CD4-positive, alpha-beta memory T cell (primary cell): ENCODE measurements at regions of chr3 and their contacts with region 1.

Region 1: GRCh38 chr3:32570421-32571191 is at the start of gene DYNC1LI1:
- DNase-seq: peak; percentile 89 to 90 (median 90)
- H3K4me3 ChIP-seq: peak within 1 kb of the TSS; percentile 90 to 93
- H3K4me3 Mint-ChIP-seq: peak within 1 kb of the TSS; percentile 91 to 97 (median 94)
- H3K27ac ChIP-seq: peak within 1 kb of the TSS; percentile 81
- H3K27ac Mint-ChIP-seq: peak within 1 kb of the TSS; percentile 56 to 97 (median 93)
- H3K4me1 ChIP-seq: peaks cover 32% of the 10 kb centered on the region
- H3K4me1 Mint-ChIP-seq: peaks cover 20 to 42% (median 28%) of the 10 kb centered on the region in 4 donors
- H3K27me3 ChIP-seq: no peaks in the 10 kb centered on the region
- H3K27me3 Mint-ChIP-seq: no peaks in the 10 kb centered on the region
- total RNA-seq, gene DYNC1LI1: 28.4 to 30.1 TPM

Region 2: GRCh38 chr3:32106280-32106928 is 464.2 kb before region 1 on chr3 and contains the start of gene GPD1L:
- CTCF ChIA-PET with region 1: no interaction called
- POLR2A ChIA-PET with region 1: no interaction called
- intact Hi-C with region 1: loop called (anchors 5 kb)
- DNase-seq: peak; percentile 88 to 91 (median 90)
- H3K4me3 ChIP-seq: peak within 1 kb of the TSS; percentile 12 to 87
- H3K4me3 Mint-ChIP-seq: peak within 1 kb of the TSS; percentile 94 to 98 (median 97)
- H3K27ac ChIP-seq: peak within 1 kb of the TSS; percentile 61
- H3K27ac Mint-ChIP-seq: peak within 1 kb of the TSS; percentile 75 to 95 (median 91)
- H3K4me1 ChIP-seq: peaks cover 33% of the 10 kb centered on the region
- H3K4me1 Mint-ChIP-seq: peaks cover 25 to 49% (median 36%) of the 10 kb centered on the region in 4 donors
- H3K27me3 ChIP-seq: no peaks in the 10 kb centered on the region
- H3K27me3 Mint-ChIP-seq: no peaks in the 10 kb centered on the region
- total RNA-seq, gene GPD1L: 22.7 to 32.5 TPM

Region 3: DNA sequence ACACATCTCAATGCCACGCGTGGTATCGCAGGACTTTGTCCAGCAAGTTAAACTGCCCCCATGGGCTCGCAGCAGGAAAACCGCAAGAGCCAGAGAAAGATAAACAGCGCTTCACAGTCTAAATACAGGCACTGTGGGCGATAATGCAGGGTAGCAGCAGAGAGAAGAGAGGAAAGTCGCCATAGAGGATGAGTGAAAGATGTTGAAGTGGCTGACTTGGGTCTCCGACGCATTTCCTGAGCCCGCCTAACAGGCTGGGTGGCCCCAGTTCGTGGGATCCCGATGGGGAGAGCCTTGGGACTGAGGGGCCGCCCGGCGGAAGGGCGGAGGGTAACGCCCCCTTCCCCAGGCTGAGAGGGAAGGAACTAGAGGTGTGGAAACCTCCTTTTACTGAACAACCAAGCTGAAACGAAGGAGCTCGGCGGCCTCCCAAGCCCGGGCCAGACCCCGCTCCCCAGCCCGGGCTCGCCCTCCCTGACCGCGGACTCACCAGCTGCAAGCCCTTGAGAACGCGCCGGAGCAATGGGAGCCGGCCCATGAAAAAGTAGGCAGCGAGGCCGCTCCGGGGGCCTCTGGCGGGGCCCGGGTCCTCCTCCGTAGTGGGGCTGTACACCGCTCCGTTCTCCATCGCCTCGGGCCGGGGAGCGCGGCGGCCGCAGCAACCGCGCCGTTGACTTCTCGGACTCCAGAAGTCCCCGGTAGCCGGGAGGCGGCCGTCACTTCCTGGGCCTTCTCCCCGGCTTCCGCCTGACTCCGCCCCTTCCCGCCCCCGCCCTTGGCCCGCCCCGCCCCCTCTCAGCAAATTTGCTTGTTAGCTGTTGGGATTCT is 68.3 kb before region 1 on chr3 and contains the start of gene CMTM6:
- CTCF ChIA-PET with region 1: no interaction called
- POLR2A ChIA-PET with region 1: no interaction called
- intact Hi-C with region 1: loop called (anchors 1 kb)
- DNase-seq: peak; percentile 69 to 80 (median 74)
- H3K4me3 ChIP-seq: peak within 1 kb of the TSS; percentile 82 to 89
- H3K4me3 Mint-ChIP-seq: peak within 1 kb of the TSS; percentile 91 to 99 (median 96)
- H3K27ac ChIP-seq: peak within 1 kb of the TSS; percentile 98
- H3K27ac Mint-ChIP-seq: peak within 1 kb of the TSS; percentile 77 to 99 (median 98)
- H3K4me1 ChIP-seq: peaks cover 46% of the 10 kb centered on the region
- H3K4me1 Mint-ChIP-seq: peaks cover 24 to 51% (median 36%) of the 10 kb centered on the region in 4 donors
- H3K27me3 ChIP-seq: no peaks in the 10 kb centered on the region
- H3K27me3 Mint-ChIP-seq: no peaks in the 10 kb centered on the region
- total RNA-seq, gene CMTM6: 30.3 to 34.8 TPM

Region 4: GRCh38 chr3:32531010-32531647 is 39.5 kb before region 1 on chr3:
- CTCF ChIA-PET with region 1: interaction called, 3 read pairs
- POLR2A ChIA-PET with region 1: no interaction called
- intact Hi-C with region 1: loop called (anchors 5 kb)
- DNase-seq: no peak
- H3K4me3 ChIP-seq: no peak overlapping the region
- H3K4me3 Mint-ChIP-seq: peak overlapping the region in 1 of 8 donors; percentile 28
- H3K27ac ChIP-seq: no peak overlapping the region
- H3K27ac Mint-ChIP-seq: peak overlapping the region in 4 of 7 donors; percentile 22 to 64 (median 44)
- H3K4me1 ChIP-seq: no peaks in the 10 kb centered on the region
- H3K4me1 Mint-ChIP-seq: peaks cover 0 to 3% (median 0%) of the 10 kb centered on the region in 4 donors
- H3K27me3 ChIP-seq: no peaks in the 10 kb centered on the region
- H3K27me3 Mint-ChIP-seq: no peaks in the 10 kb centered on the region